Lower leg skin (tissue), 4 donors: ENCODE measurements at regions of chr7 and their contacts with region 1.

Region 1: GRCh38 chr7:137656227-137656849 is 190.4 kb downstream of the DGKI start:
- DNase-seq: peak; percentile 73 to 95
- H3K4me3 ChIP-seq: no peak overlapping the region
- CTCF ChIP-seq: peak in 1 of 3 donors; percentile 56
- POLR2A ChIP-seq: no peak

Region 2: GRCh38 chr7:137898839-137899721 is 242.7 kb after region 1 on chr7:
- intact Hi-C with region 1: loop called (anchors 5 kb)
- DNase-seq: peak; percentile 73 to 95
- H3K4me3 ChIP-seq: no peak overlapping the region
- CTCF ChIP-seq: peak in 1 of 3 donors; percentile 84
- POLR2A ChIP-seq: no peak

Region 3: GRCh38 chr7:138015096-138015495 is 358.8 kb after region 1 on chr7:
- intact Hi-C with region 1: loop called (anchors 10 kb)
- DNase-seq: no peak
- H3K4me3 ChIP-seq: no peak overlapping the region
- CTCF ChIP-seq: no peak
- POLR2A ChIP-seq: no peak